MCF 10A (cell line): ENCODE measurements at regions of chrX and their contacts with region 1.

Region 1: DNA sequence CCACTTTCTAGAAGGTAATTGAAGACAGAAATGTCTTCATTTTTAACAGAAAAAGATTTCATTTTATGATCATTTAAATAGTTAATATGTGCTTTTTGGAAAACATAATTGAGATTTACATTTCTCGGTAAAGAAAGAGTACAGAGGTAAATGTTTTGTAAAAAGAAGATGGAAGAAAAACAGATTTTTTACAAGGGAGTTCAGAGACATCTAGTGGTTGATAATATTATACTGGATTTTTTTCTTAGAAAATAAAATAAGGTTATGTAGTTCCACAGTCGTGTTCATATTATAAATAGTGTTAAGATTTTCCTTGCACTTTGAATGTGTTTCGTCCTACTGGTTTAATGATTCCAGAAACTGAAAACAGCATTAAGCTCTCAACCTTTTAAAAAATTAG is 60.6 kb downstream of the SMARCA1 start:
- DNase-seq: no peak
- H3K4me3 Mint-ChIP-seq: no peak overlapping the region
- H3K27ac Mint-ChIP-seq: no peak overlapping the region
- H3K4me1 Mint-ChIP-seq: no peaks in the 10 kb centered on the region
- H3K27me3 Mint-ChIP-seq: peaks cover 31% of the 10 kb centered on the region
- CTCF ChIP-seq: no peak

Region 2: GRCh38 chrX:129318375-129318774 is 144.3 kb before region 1 on chrX:
- CTCF ChIA-PET with region 1: interaction called, 12 read pairs
- POLR2A ChIA-PET with region 1: no interaction called
- intact Hi-C with region 1: loop called (anchors 1 kb)
- DNase-seq: peak; percentile 45
- H3K4me3 Mint-ChIP-seq: no peak overlapping the region
- H3K27ac Mint-ChIP-seq: no peak overlapping the region
- H3K4me1 Mint-ChIP-seq: no peaks in the 10 kb centered on the region
- H3K27me3 Mint-ChIP-seq: no peaks in the 10 kb centered on the region
- CTCF ChIP-seq: peak; percentile 34

Region 3: DNA sequence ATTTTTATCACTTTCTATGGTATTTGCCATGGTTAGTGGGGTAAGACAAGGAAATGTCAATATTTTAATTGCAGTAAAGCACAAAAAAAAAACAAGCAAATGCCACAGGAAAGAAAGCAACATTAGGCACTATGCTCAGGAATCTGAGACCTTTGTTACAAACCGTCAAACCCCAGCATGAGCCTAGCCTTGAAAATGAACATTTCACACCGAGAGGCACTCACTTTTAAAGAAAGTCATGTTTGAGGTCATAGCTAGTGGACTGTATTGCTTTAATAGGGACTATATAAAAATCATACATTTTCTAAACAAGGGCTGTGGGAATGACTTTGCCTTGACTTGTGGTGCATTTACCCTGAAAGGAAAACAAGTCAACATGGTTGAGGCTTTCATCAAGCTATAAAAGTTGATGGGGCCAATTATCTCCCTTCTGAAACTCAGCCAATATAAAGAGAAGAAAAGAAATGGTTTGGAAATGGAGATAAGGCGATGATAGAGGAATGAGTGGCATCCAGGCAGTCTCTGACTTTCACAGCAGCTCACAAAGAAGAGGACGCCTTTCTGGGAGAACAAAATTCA is 58.2 kb before region 1 on chrX:
- CTCF ChIA-PET with region 1: no interaction called
- POLR2A ChIA-PET with region 1: no interaction called
- intact Hi-C with region 1: no loop called
- DNase-seq: no peak
- H3K4me3 Mint-ChIP-seq: no peak overlapping the region
- H3K27ac Mint-ChIP-seq: no peak overlapping the region
- H3K4me1 Mint-ChIP-seq: no peaks in the 10 kb centered on the region
- H3K27me3 Mint-ChIP-seq: no peaks in the 10 kb centered on the region
- CTCF ChIP-seq: no peak